Activated CD4-positive, alpha-beta memory T cell treated with anti-CD3 and anti-CD28 coated beads for 36 hours (primary cell): ENCODE measurements at regions of chr13 and their contacts with region 1.

Region 1: DNA sequence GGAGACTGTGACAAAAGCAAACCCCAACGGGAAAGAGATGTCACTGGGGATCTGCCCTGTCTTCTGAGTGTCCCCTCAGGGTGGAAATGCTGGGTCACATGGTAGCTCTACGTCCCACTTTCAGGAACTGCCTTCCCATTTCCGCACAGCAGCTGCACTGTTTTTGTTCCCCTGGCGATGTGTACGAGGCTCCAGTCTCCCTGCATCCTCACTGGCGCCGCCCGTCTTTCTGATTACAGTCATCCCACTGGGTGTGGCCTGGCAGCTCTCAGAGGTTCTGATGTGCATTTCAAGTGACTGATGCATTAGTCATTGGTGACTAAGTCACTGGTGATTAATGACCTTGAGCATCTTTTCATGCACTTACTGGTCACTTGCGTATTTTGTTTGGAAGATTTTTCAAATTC is 21.2 kb downstream of the PCID2 start:
- DNase-seq: peak; percentile 84
- H3K4me3 Mint-ChIP-seq: peak overlapping the region; percentile 53
- H3K27ac Mint-ChIP-seq: peak overlapping the region; percentile 90
- H3K4me1 Mint-ChIP-seq: peaks cover 40% of the 10 kb centered on the region
- H3K27me3 Mint-ChIP-seq: no peaks in the 10 kb centered on the region

Region 2: GRCh38 chr13:113138792-113139551 is 48.3 kb before region 1 on chr13:
- CTCF ChIA-PET with region 1: no interaction called
- POLR2A ChIA-PET with region 1: no interaction called
- intact Hi-C with region 1: no loop called
- DNase-seq: no peak
- H3K4me3 Mint-ChIP-seq: no peak overlapping the region
- H3K27ac Mint-ChIP-seq: no peak overlapping the region
- H3K4me1 Mint-ChIP-seq: no peaks in the 10 kb centered on the region
- H3K27me3 Mint-ChIP-seq: no peaks in the 10 kb centered on the region

Region 3: DNA sequence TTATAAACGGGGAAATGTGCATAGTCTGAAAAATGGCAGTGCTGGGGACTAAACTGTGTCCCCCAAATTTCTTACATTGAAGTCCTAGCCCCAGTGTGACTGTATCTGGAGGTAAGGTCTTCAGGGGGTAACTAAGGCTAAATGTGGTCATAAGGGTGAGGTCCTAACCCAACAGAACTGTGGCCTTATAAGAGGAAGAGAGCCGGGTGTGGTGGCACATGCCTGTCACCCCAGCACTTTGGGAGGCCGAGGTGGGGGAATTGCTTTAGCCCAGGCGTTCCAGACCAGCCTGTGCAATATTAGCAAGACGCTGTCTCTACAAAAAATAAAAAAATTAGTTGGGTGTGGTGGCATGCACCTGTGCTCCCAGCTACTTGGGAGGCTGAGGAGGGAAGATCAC is 11.0 kb before region 1 on chr13:
- CTCF ChIA-PET with region 1: interaction called, 4 read pairs
- POLR2A ChIA-PET with region 1: interaction called, 3 read pairs
- intact Hi-C with region 1: loop called (anchors 1 kb)
- DNase-seq: peak; percentile 70
- H3K4me3 Mint-ChIP-seq: peak overlapping the region; percentile 1
- H3K27ac Mint-ChIP-seq: peak overlapping the region; percentile 79
- H3K4me1 Mint-ChIP-seq: peaks cover 33% of the 10 kb centered on the region
- H3K27me3 Mint-ChIP-seq: no peaks in the 10 kb centered on the region